Activated T-helper 1 cell treated with anti-CD3 and anti-CD28 coated beads, Interleukin-12 subunit alpha, Interleukin-12 subunit beta, Interleukin-2, Interleukin-4 antibody, amounts not matched to agents 30 ng/mL and 10 ng/mL and 1 ng/mL, durations not matched to agents 14 hours and 24 hours and 36 hours (primary cell): ENCODE measurements at regions of chr1 and their contacts with region 1.

Region 1: GRCh38 chr1:36149237-36149972 is at the start of gene TRAPPC3:
- DNase-seq: peak; percentile 99
- H3K4me3 Mint-ChIP-seq: peak within 1 kb of the TSS; percentile 92
- H3K27ac Mint-ChIP-seq: peak within 1 kb of the TSS; percentile 99
- H3K4me1 Mint-ChIP-seq: peaks cover 68% of the 10 kb centered on the region
- H3K27me3 Mint-ChIP-seq: no peaks in the 10 kb centered on the region
- total RNA-seq, gene TRAPPC3: 74.2 and 74.4 TPM in 2 replicates

Region 2: DNA sequence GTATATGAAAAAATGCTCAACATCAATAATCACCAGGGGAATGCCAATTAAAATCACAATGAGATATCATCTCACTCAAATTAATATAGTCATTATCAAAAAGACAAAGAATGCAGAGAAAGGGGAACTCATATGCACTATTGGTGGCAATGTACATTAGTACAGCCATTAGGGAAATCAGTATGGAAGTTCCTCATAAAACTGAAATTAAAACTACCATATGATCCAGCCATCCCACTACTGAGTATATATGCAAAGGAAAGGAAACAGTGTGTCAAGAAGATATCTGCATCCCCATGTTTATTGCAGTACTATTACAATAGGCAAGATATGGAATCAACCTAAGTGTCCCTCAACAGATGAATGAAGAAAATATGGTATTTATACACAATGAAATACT is 97.6 kb before region 1 on chr1:
- intact Hi-C with region 1: no loop called
- DNase-seq: no peak
- H3K4me3 Mint-ChIP-seq: no peak overlapping the region
- H3K27ac Mint-ChIP-seq: no peak overlapping the region
- H3K4me1 Mint-ChIP-seq: no peaks in the 10 kb centered on the region
- H3K27me3 Mint-ChIP-seq: no peaks in the 10 kb centered on the region

Region 3: GRCh38 chr1:36088575-36089443 is 60.6 kb before region 1 on chr1 and contains the start of gene ADPRS:
- intact Hi-C with region 1: loop called (anchors 1 kb)
- DNase-seq: peak; percentile 88
- H3K4me3 Mint-ChIP-seq: peak within 1 kb of the TSS; percentile 97
- H3K27ac Mint-ChIP-seq: peak within 1 kb of the TSS; percentile 96
- H3K4me1 Mint-ChIP-seq: peaks cover 20% of the 10 kb centered on the region
- H3K27me3 Mint-ChIP-seq: peaks cover 7% of the 10 kb centered on the region
- total RNA-seq, gene ADPRS: 32.6 and 33.6 TPM in 2 replicates

Region 4: GRCh38 chr1:36223993-36224536 is 74.7 kb after region 1 on chr1 and contains the start of gene THRAP3:
- intact Hi-C with region 1: loop called (anchors 1 kb)
- DNase-seq: peak; percentile 100
- H3K4me3 Mint-ChIP-seq: peak within 1 kb of the TSS; percentile 95
- H3K27ac Mint-ChIP-seq: peak within 1 kb of the TSS; percentile 100
- H3K4me1 Mint-ChIP-seq: peaks cover 36% of the 10 kb centered on the region
- H3K27me3 Mint-ChIP-seq: peaks cover 2% of the 10 kb centered on the region
- total RNA-seq, gene THRAP3: 147 and 154 TPM in 2 replicates

Region 5: DNA sequence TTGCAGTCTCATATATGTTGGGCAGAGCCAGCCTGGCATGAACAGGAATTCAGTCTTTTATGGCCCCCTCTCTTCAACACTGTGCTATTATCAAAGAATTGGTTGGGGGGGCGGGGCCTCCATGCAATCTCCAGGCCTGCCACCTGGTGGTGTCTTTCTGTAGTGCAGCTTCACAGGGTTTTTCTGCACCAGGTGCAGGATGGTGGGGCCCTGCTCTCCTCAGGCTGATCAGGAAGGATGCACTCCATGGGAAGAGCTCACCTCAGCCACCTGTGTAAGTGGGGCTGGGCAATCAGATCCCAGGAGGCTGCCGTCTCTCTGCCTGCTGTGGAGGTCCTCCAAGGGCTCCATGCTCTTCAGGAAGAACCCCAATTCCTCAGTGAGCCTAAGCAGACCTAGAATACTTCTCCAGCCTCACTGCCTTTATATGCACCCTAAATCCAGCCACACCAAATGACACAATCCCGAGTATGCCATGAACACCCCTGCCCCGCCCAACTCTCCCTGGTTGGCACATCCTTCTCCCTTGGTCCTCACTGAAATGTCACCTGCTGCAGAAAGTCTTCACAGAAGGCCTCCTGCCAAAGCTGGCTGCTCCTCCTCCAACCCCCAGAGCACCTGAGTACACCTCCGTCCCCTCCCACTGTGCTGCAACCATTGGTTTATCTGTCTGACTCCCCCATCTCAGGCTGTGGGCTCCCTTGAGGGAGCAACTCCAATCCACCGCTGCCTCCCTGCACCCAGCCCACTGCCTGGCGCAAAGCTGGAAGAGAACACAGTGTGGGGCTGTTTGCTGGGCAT is 219.9 kb after region 1 on chr1:
- intact Hi-C with region 1: loop called (anchors 1 kb)
- DNase-seq: peak; percentile 65
- H3K4me3 Mint-ChIP-seq: no peak overlapping the region
- H3K27ac Mint-ChIP-seq: peak overlapping the region; percentile 35
- H3K4me1 Mint-ChIP-seq: peaks cover 69% of the 10 kb centered on the region
- H3K27me3 Mint-ChIP-seq: no peaks in the 10 kb centered on the region

Region 6: DNA sequence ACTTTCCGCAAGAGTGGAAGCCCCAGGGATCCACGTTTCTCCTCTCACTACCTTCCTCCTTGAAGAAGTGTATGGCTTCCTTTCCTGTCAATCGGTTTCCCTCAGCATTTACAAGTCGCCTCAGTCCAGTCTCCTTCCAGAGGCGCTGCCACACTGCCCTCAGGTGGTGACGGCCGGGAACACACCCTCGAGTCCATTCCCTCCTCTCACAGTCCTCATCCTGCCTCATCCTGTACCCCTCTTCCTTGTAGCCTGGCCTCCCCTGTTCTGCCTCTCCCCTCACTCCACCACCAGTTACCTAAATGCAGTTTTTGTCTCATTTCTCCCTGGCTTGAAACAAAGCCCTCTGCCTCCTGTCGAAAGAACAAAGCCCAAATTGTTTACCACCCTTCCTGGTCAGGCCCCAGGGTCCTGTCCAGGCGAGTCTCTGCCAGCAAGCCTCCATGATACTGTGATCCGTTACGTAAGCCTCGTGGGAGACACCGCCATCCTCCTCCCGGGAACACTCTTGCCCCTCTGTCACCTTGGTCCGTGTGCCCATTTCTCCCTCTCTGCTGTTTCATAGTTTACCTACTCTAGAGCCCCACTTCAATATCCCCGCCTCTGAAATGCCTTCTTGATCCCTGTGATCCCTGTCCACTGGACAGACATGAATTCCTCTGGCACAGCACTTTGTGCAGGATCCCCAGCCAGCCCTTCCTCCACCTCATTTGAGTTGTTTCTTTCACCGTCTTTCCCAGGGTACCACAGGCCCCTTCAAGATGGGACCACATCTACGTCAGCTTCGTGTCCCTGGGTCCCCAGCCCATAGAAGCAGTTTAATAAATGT is 271.6 kb after region 1 on chr1:
- intact Hi-C with region 1: loop called (anchors 1 kb)
- DNase-seq: peak; percentile 81
- H3K4me3 Mint-ChIP-seq: no peak overlapping the region
- H3K27ac Mint-ChIP-seq: peak overlapping the region; percentile 48
- H3K4me1 Mint-ChIP-seq: peaks cover 14% of the 10 kb centered on the region
- H3K27me3 Mint-ChIP-seq: peaks cover 2% of the 10 kb centered on the region